Activated CD4-positive, alpha-beta memory T cell treated with anti-CD3 and anti-CD28 coated beads for 36 hours (primary cell): ENCODE measurements at regions of chr19 and their contacts with region 1.

Region 1: DNA sequence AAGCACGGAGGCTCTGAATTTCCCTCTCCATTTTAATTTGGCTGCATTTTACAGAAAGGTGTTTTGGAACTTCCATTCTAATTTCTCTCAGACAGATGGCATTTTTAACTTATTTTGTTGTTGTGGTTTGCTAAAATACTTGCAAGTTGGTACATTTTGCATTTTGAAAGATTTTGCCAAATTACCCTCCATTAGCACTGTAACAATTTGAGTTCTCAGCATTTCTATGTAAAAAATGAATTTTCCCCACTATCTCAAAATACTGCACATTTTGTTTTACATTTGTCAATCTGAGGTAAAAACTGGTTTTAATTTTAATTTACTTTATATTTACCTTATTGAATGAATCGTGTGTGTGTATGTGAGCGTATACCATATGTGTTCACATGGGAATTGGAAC is 7.0 kb upstream of the HNRNPL start:
- DNase-seq: no peak
- H3K4me3 Mint-ChIP-seq: no peak overlapping the region
- H3K27ac Mint-ChIP-seq: peak overlapping the region; percentile 87
- H3K4me1 Mint-ChIP-seq: peaks cover 28% of the 10 kb centered on the region
- H3K27me3 Mint-ChIP-seq: no peaks in the 10 kb centered on the region

Region 2: DNA sequence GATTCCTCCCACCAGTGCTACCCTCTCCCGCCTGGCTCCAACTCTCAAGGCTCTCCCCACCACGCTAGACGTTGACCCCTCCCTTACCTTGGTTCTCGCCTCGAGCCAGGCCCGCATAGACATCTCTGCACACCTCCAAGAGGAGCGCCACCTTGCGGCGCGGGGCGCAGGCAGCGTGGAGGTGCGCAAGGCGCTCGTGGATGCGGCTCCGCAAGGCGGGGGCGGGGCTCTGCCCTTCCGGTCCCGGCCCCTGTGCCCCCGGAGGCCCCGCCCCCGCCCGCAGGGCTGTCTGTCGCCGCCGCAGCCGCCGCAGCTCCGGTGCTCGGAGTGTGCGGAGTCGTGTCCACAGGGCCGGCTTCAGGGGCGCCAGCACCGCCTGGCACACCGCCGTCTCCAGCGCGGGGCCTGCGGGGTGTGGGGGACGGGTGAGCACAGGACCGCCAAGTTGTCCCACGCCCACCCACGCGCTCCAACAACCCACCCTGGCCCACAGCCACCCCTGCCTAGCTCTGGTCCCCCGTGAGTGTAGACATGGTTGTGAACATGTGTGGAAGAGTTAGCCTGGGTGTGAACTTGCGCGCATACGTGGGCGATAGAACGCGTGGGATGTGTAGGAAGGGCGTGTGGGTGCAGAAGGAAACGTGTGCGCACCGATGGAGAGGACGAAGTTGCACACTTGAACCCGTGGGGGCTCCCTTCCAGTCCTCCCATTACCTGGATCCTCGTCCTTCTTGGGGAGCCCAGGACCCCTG is 13.2 kb after region 1 on chr19:
- CTCF ChIA-PET with region 1: interaction called, 15 read pairs
- POLR2A ChIA-PET with region 1: interaction called, 24 read pairs
- intact Hi-C with region 1: loop called (anchors 1 kb)
- DNase-seq: peak; percentile 94
- H3K4me3 Mint-ChIP-seq: peak overlapping the region; percentile 76
- H3K27ac Mint-ChIP-seq: peak overlapping the region; percentile 79
- H3K4me1 Mint-ChIP-seq: peaks cover 40% of the 10 kb centered on the region
- H3K27me3 Mint-ChIP-seq: no peaks in the 10 kb centered on the region